ENCODE measurements at regions of chr6 and their contacts with region 1.

Region 1: GRCh38 chr6:70107852-70108629 is 194.8 kb downstream of the COL9A1 start:
- DNase-seq: no peak
- H3K4me3 ChIP-seq: no peak overlapping the region
- H3K27ac ChIP-seq: no peak overlapping the region
- H3K4me1 ChIP-seq: no peaks in the 10 kb centered on the region
- H3K27me3 ChIP-seq: no peaks in the 10 kb centered on the region
- CTCF ChIP-seq: peak; percentile 17 to 65 (median 58)

Region 2: GRCh38 chr6:69732640-69733039 is 375.4 kb before region 1 on chr6:
- intact Hi-C with region 1: loop called (anchors 10 kb)
- DNase-seq: no peak
- H3K4me3 ChIP-seq: no peak overlapping the region
- H3K27ac ChIP-seq: no peak overlapping the region
- H3K4me1 ChIP-seq: no peaks in the 10 kb centered on the region
- H3K27me3 ChIP-seq: no peaks in the 10 kb centered on the region
- CTCF ChIP-seq: no peak

Region 3: DNA sequence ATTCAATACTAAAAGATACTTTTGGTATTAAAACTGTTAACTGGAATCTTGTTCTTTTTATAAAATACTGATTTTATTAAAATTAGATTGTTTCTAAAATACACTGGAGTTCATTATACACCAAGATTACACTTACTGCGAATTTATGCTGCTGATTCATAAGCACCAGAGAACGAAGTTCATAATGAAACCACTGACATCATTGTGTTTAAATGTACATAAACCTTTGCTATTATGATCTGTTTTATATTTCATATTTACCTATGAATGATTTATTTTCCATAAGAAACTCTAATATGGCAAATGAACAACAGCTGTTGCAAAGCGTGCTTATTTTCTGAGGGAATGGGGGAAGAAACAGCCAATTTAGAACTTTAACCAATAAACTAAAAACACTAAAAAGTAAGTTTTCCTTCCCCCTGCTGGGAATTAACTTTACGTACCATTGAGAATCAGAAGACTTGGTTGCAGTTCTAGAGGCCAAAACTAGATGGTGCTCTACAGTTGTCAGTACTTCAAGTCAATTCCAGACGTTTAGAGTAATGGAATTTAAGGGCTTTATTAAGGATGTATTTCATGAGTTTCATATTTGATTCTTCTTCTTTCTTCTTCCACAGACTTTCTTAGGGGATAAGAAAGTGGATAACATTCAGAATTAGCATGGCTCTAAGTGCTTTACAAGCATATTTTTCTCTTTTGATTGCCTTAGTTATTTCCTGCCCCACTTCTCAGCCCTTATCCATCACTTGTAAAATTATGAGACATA is 272.4 kb before region 1 on chr6:
- intact Hi-C with region 1: loop called (anchors 1 kb)
- DNase-seq: no peak
- H3K4me3 ChIP-seq: no peak overlapping the region
- H3K27ac ChIP-seq: no peak overlapping the region
- H3K4me1 ChIP-seq: no peaks in the 10 kb centered on the region
- H3K27me3 ChIP-seq: no peaks in the 10 kb centered on the region
- CTCF ChIP-seq: peak; percentile 46 to 88 (median 88)

Region 4: DNA sequence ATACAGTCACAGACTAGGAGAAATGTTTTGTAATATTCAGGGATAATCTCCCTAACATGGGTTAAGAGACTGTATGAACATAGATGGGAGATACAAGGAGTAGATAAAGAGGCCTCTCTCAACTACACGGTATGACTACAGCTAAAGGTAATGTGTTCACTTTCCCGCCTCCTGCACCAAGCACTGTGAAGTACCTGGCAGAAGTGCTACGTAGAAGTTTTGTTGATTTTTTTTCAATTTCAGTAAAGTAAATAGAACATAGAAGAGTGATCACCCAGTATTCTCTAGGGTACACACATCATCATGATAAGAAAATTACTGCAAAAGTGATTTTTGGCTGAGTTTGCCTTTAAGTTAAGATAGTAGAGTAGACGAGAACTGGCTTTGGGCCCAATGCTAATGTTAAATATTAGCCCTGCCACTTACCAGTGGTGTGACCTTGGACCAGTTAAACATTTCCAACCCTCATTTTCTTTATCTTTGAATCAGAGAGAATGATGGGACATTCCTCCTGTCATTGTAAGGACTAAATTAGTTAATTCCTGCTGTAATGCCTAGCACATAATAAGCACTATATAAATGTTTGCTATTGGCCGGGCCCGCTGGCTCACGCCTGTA is 11.3 kb after region 1 on chr6:
- intact Hi-C with region 1: no loop called
- DNase-seq: no peak
- H3K4me3 ChIP-seq: no peak overlapping the region
- H3K27ac ChIP-seq: no peak overlapping the region
- H3K4me1 ChIP-seq: no peaks in the 10 kb centered on the region
- H3K27me3 ChIP-seq: no peaks in the 10 kb centered on the region
- CTCF ChIP-seq: no peak